ENCODE measurements at regions of chr1 and their contacts with region 1.

Region 1: GRCh38 chr1:205273551-205273982 is 45.8 kb downstream of the TMCC2 start:
- DNase-seq: peak; percentile 86
- ATAC-seq: peak; percentile 79
- H3K4me3 Mint-ChIP-seq: no peak overlapping the region
- H3K27ac Mint-ChIP-seq: no peak overlapping the region
- H3K4me1 Mint-ChIP-seq: peaks cover 9% of the 10 kb centered on the region
- H3K27me3 Mint-ChIP-seq: peaks cover 7% of the 10 kb centered on the region

Region 2: GRCh38 chr1:205227584-205228006 is 46.0 kb before region 1 on chr1 and contains the start of gene TMCC2:
- POLR2A ChIA-PET with region 1: no interaction called
- DNase-seq: peak; percentile 89
- ATAC-seq: peak; percentile 92
- H3K4me3 Mint-ChIP-seq: peak within 1 kb of the TSS; percentile 85
- H3K27ac Mint-ChIP-seq: peak within 1 kb of the TSS; percentile 87
- H3K4me1 Mint-ChIP-seq: peaks cover 34% of the 10 kb centered on the region
- H3K27me3 Mint-ChIP-seq: peaks cover 41% of the 10 kb centered on the region
- total RNA-seq, gene TMCC2: 3.4 to 4.4 TPM

Region 3: DNA sequence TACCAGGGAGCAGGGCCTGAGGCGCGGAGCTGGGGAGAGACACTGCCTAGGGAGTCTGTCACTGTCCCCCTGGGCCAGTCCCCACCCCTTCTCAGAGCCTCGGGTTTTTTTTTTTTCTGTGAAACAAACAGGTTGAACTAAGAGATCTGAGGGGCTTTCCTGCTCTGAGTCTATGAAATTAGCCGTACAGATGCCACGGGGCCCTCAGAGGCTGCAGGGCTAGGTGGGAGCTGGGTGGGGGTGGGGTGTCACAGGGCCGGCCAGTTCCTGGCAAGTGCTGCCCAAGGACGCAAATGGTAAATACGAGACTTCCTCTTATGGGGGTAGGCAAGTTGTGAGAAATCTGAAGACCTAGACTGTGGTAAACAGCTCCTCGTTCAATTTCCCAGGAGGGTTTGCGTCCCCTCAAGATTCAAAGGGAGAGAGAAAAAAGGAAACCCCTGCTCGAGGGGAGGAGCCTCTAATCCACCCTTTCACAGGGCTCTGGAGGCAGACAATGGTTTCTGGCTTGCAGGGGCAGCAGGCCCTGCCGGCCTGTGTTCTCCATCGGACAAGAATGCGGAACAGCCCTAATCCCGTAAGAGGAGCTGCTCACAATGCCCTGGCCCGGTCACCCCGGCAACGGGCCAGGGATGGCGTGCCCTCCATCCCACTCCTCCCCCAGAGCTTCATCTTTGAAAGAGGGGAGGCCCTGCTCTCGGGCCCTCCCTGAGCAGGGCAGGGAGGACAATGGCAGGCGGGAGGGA is 40.2 kb after region 1 on chr1:
- POLR2A ChIA-PET with region 1: interaction called, 15 read pairs
- DNase-seq: peak; percentile 58
- ATAC-seq: peak; percentile 75
- H3K4me3 Mint-ChIP-seq: peak overlapping the region; percentile 79
- H3K27ac Mint-ChIP-seq: peak overlapping the region; percentile 83
- H3K4me1 Mint-ChIP-seq: peaks cover 43% of the 10 kb centered on the region
- H3K27me3 Mint-ChIP-seq: no peaks in the 10 kb centered on the region

Region 4: GRCh38 chr1:205321164-205321958 is 47.8 kb after region 1 on chr1 and contains the start of gene NUAK2:
- POLR2A ChIA-PET with region 1: interaction called, 25 read pairs
- DNase-seq: peak; percentile 82
- ATAC-seq: peak; percentile 79
- H3K4me3 Mint-ChIP-seq: peak within 1 kb of the TSS; percentile 87
- H3K27ac Mint-ChIP-seq: peak within 1 kb of the TSS; percentile 77
- H3K4me1 Mint-ChIP-seq: peaks cover 40% of the 10 kb centered on the region
- H3K27me3 Mint-ChIP-seq: peaks cover 24% of the 10 kb centered on the region
- total RNA-seq, gene NUAK2: 13.0 to 14.7 TPM

Region 5: GRCh38 chr1:205375835-205376545 is 102.4 kb after region 1 on chr1:
- POLR2A ChIA-PET with region 1: no interaction called
- DNase-seq: no peak
- ATAC-seq: no peak
- H3K4me3 Mint-ChIP-seq: no peak overlapping the region
- H3K27ac Mint-ChIP-seq: no peak overlapping the region
- H3K4me1 Mint-ChIP-seq: peaks cover 5% of the 10 kb centered on the region
- H3K27me3 Mint-ChIP-seq: peaks cover 57% of the 10 kb centered on the region

Measured in activated naive CD8-positive, alpha-beta T cell treated with anti-CD3 and anti-CD28 coated beads, Interleukin-2, amount 10 ng/mL, durations not matched to agents 7 days and 5 days (primary cell).